GM12878 (cell line): ENCODE measurements at regions of chr15 and their contacts with region 1.

Region 1: GRCh38 chr15:66951531-66952320 is 113.7 kb upstream of the SMAD3 start:
- DNase-seq: no peak
- ATAC-seq: no peak
- H3K4me3 ChIP-seq: no peak overlapping the region
- H3K27ac ChIP-seq: no peak overlapping the region
- H3K4me1 ChIP-seq: peaks cover 6% of the 10 kb centered on the region
- H3K27me3 ChIP-seq: no peaks in the 10 kb centered on the region
- CTCF ChIP-seq: no peak
- EP300 ChIP-seq: no peak
- POLR2A ChIP-seq: no peak
- RAD21 ChIP-seq: no peak

Region 2: GRCh38 chr15:67196672-67197363 is 245.1 kb after region 1 on chr15:
- CTCF ChIA-PET with region 1: no interaction called
- POLR2A ChIA-PET with region 1: no interaction called
- RAD21 ChIA-PET with region 1: interaction called, 4 read pairs
- SMC1A ChIA-PET with region 1: interaction called, 3 read pairs
- in situ Hi-C with region 1: no loop called
- intact Hi-C with region 1: loop called (anchors 5 kb)
- DNase-seq: no peak
- ATAC-seq: no peak; the same call in 1 of the 3 replicates
- H3K4me3 ChIP-seq: no peak overlapping the region
- H3K27ac ChIP-seq: no peak overlapping the region
- H3K4me1 ChIP-seq: peaks cover 9% of the 10 kb centered on the region
- H3K27me3 ChIP-seq: no peaks in the 10 kb centered on the region
- CTCF ChIP-seq: no peak
- EP300 ChIP-seq: no peak
- POLR2A ChIP-seq: peak; percentile 49; the same call in 1 of the 2 replicates
- RAD21 ChIP-seq: no peak